ENCODE measurements at regions of chr9 and their contacts with region 1.

Region 1: DNA sequence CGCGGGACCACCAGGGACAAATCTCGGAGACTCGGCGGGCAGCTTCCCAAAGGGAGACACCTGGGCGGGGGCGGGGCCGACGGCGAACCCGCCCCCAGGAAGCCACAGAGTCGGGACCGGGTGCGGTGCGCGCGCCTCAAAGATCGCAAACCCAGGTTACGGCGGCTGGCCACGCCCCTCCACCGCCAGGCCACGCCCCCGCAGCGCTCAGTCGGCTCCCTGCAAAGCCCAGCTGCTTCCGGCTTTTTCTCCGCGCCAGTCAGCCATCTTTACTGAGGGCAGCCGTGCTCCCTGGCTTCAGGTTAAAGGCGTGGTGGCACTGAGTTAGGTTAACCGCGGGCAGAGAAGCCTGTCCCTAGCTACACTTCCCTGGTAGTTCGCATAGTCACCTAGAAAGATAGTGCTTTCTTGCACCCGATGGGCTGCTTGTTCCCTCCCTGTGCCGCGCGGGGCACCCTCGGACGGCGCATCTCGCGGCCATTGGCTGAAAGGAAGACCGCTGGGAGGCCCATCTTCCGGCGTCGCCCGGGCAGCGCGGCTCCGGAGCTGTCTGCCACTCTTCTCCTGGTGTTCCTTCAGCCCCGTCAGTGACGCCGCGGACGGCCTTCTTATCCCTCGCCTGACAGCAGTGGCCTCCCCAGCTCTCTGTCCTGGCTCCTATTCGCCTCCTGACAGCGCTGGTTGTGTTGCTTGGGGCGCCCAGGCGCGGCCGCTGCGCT is at the start of gene TBC1D2:
- DNase-seq: peak; percentile 98
- H3K4me3 Mint-ChIP-seq: peak within 1 kb of the TSS; percentile 85
- H3K27ac Mint-ChIP-seq: peak within 1 kb of the TSS; percentile 95
- H3K4me1 Mint-ChIP-seq: peaks cover 32% of the 10 kb centered on the region
- H3K27me3 Mint-ChIP-seq: no peaks in the 10 kb centered on the region
- total RNA-seq, gene TBC1D2: 5.2 to 5.3 TPM

Region 2: GRCh38 chr9:96612105-96612965 is 1643.4 kb before region 1 on chr9:
- CTCF ChIA-PET with region 1: no interaction called
- POLR2A ChIA-PET with region 1: no interaction called
- intact Hi-C with region 1: no loop called
- DNase-seq: no peak
- H3K4me3 Mint-ChIP-seq: no peak overlapping the region
- H3K27ac Mint-ChIP-seq: no peak overlapping the region
- H3K4me1 Mint-ChIP-seq: no peaks in the 10 kb centered on the region
- H3K27me3 Mint-ChIP-seq: peaks cover 39% of the 10 kb centered on the region

Region 3: GRCh38 chr9:97696803-97697601 is 558.7 kb before region 1 on chr9 and contains the start of gene XPA:
- CTCF ChIA-PET with region 1: no interaction called
- POLR2A ChIA-PET with region 1: no interaction called
- intact Hi-C with region 1: loop called (anchors 10 kb)
- DNase-seq: peak; percentile 98
- H3K4me3 Mint-ChIP-seq: peak within 1 kb of the TSS; percentile 91
- H3K27ac Mint-ChIP-seq: peak within 1 kb of the TSS; percentile 91
- H3K4me1 Mint-ChIP-seq: peaks cover 47% of the 10 kb centered on the region
- H3K27me3 Mint-ChIP-seq: no peaks in the 10 kb centered on the region
- total RNA-seq, gene XPA: 8.5 to 9.6 TPM

Region 4: GRCh38 chr9:98101868-98102273 is 153.9 kb before region 1 on chr9:
- CTCF ChIA-PET with region 1: interaction called, 5 read pairs
- POLR2A ChIA-PET with region 1: interaction called, 9 read pairs
- intact Hi-C with region 1: loop called (anchors 5 kb)
- DNase-seq: peak; percentile 89
- H3K4me3 Mint-ChIP-seq: peak overlapping the region; percentile 66
- H3K27ac Mint-ChIP-seq: peak overlapping the region; percentile 95
- H3K4me1 Mint-ChIP-seq: peaks cover 88% of the 10 kb centered on the region
- H3K27me3 Mint-ChIP-seq: no peaks in the 10 kb centered on the region

Region 5: DNA sequence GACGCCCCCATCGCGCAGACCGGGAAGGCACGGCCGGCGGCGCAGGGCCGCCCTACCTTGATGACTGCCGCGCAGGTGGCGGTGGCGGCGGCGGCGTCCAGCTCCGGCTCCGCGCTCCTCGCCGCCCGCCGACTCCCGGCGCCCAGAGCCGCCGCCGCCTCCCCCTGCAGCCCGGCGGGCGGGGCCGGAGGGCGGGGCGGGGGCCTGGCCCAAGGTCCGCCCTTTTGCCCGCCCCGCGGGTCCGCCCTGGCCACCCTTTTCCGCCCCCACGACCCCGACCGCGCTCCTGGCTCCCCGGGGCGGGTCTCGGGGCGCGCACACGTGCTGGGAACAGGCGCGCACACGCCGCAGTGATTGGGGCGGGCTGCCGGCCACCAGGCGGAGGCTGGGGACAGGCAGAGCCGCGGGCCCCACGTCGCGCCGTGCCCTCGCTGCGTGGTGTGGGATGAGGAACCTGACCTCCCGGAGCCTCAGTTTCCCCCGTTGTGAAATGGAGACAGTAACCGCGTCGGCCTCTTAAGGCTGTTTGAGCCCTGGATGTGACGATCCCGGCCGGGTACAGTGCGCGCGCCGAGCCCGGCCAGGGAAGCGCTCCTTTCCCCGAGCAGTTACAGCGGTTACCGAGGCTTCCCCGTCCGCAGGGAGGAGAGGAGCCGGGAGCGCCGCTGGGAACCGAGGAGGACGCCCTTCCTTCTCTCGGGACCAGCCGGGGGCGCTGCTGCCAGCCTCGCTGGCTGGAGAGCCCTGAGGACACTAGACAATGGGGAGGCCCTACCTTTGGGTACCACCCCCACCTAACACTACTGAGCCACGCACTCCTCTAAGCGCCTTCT is 63.0 kb before region 1 on chr9 and contains the start of gene CORO2A:
- CTCF ChIA-PET with region 1: interaction called, 7 read pairs
- POLR2A ChIA-PET with region 1: interaction called, 7 read pairs
- intact Hi-C with region 1: loop called (anchors 1 kb)
- DNase-seq: peak; percentile 79
- H3K4me3 Mint-ChIP-seq: peak within 1 kb of the TSS; percentile 86
- H3K27ac Mint-ChIP-seq: peak within 1 kb of the TSS; percentile 49
- H3K4me1 Mint-ChIP-seq: peaks cover 21% of the 10 kb centered on the region
- H3K27me3 Mint-ChIP-seq: no peaks in the 10 kb centered on the region
- total RNA-seq, gene CORO2A: 9.8 to 9.9 TPM

Region 6: DNA sequence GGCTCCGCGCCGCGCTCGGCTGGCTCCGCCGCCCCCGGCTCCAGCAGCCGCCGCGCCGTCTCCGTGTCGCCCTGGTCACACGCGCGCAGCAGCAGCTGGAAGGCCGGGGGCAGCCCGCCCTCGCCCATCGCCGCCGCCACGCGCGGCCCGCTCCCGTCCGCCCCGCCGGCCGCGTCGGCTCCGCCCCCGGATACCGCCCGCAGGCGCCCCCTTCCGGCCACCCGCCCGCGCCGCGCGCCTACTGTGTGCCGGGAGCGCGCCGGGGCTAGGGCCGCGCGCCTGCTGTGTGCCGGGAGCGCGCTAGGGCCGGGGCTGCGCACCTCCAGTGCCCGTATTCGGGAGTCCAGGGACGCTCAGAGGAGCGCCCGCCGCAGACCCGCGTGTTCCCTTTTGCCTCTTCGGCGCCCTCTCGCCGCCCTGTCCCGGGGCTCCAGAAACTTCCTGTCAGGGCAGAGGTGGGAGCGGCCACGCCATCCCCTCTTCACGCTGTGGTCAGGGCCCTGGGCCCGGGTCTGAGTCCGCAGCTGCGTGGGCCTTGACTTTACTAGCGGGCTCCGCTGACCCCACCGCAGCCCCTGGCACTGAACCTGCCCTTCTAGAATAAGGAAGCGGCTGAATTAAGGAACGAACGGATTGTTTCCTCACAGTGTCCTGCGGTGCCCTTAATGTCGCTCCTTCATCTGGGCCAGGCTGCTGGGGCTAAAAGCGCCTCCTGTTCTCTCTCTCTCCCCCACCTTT is 540.8 kb after region 1 on chr9 and contains the start of gene ANKS6:
- CTCF ChIA-PET with region 1: no interaction called
- POLR2A ChIA-PET with region 1: interaction called, 5 read pairs
- intact Hi-C with region 1: loop called (anchors 1 kb)
- DNase-seq: peak; percentile 84
- H3K4me3 Mint-ChIP-seq: peak within 1 kb of the TSS; percentile 76
- H3K27ac Mint-ChIP-seq: peak within 1 kb of the TSS; percentile 54
- H3K4me1 Mint-ChIP-seq: peaks cover 27% of the 10 kb centered on the region
- H3K27me3 Mint-ChIP-seq: no peaks in the 10 kb centered on the region
- total RNA-seq, gene ANKS6: 13.0 to 16.0 TPM